PC-3 (cell line): ENCODE measurements at regions of chr2 and their contacts with region 1.

Region 1: DNA sequence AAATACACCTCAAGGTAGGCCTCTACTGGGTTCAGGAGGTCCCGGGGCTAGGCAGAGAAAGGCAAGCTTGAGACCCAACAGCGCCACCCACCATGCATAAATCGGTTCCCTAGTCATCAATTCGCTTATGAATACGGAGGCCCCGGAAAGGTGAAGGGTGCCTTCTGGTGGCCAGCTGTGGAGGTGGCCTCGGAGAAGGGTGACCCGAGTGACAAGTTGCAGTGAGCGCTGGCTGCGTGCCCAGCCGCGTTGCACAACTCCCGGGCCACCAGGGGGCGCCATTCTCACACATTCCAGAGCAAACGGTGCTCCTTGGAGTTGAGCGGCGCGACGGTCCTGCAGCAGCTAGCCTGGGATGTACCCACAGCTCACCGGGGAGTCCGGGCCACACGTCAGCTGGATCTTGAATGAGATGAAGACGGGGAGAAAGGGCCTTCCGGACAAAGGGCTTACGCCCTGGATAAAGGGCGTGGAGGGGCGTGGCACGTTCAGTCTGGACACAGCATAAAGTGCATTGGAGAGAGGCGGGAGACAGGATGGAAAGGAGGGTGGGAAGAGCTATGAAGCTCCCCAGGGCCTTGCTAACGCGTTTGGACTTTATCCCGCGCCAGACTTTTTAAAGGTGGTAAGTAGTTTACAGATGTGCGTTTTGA is 20.4 kb downstream of the TMSB10 start:
- DNase-seq: peak; percentile 98
- ATAC-seq: peak; percentile 86
- H3K4me3 ChIP-seq: peak overlapping the region; percentile 74
- H3K27ac ChIP-seq: peak overlapping the region; percentile 80
- H3K4me1 ChIP-seq: peaks cover 20% of the 10 kb centered on the region
- H3K27me3 ChIP-seq: no peaks in the 10 kb centered on the region
- CTCF ChIP-seq: peak; percentile 99

Region 2: GRCh38 chr2:84495539-84496146 is 430.2 kb before region 1 on chr2:
- CTCF ChIA-PET with region 1: no interaction called
- POLR2A ChIA-PET with region 1: no interaction called
- intact Hi-C with region 1: loop called (anchors 5 kb)
- DNase-seq: peak; percentile 72
- ATAC-seq: peak; percentile 74
- H3K4me3 ChIP-seq: no peak overlapping the region
- H3K27ac ChIP-seq: no peak overlapping the region
- H3K4me1 ChIP-seq: peaks cover 18% of the 10 kb centered on the region
- H3K27me3 ChIP-seq: no peaks in the 10 kb centered on the region
- CTCF ChIP-seq: peak; percentile 77

Region 3: DNA sequence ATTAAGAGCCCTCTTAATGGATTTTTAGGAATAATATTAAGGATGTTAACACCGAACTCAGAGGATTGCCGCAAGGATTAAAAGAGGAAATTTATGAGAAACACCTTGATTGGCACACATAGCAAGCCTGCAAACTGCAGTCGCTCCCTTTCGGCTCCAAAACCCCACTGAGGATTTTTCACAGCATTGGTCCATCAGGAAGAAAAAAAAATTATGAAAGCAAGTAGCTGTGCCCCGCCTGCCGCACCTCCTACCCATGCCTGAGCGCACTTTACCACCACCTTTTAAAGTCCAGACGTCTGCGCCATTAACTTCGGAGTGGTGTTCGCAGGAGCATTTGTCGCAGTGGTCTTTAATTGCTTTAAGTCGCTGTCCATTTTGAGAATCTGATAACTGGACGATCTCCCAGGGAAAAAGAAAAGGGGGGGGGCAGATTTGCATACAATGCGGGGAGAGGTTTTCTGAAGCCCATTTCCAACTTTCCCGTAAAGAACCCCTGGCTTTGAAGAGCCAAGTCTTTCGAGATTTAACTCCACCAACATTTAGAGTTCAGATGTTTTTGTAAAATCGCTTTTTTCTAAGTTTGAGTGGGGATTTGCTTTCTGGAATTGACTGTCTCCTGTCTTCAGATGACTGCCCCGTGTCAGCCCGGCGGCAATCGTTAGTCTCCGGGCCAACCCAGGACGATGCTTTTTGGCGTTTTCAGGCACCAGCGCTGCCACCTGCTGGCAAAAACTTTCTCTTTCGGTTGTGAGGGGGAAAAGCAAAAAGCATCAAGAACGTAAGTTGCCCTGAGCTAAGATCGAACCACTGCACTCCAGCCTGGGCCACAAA is 44.1 kb before region 1 on chr2:
- CTCF ChIA-PET with region 1: interaction called, 23 read pairs
- POLR2A ChIA-PET with region 1: no interaction called
- intact Hi-C with region 1: loop called (anchors 1 kb)
- DNase-seq: peak; percentile 91
- ATAC-seq: peak; percentile 90
- H3K4me3 ChIP-seq: peak overlapping the region; percentile 77
- H3K27ac ChIP-seq: no peak overlapping the region
- H3K4me1 ChIP-seq: peaks cover 5% of the 10 kb centered on the region
- H3K27me3 ChIP-seq: peaks cover 15% of the 10 kb centered on the region
- CTCF ChIP-seq: peak; percentile 87

Region 4: GRCh38 chr2:84946204-84947009 is 20.6 kb after region 1 on chr2:
- CTCF ChIA-PET with region 1: interaction called, 16 read pairs
- POLR2A ChIA-PET with region 1: interaction called, 5 read pairs
- intact Hi-C with region 1: no loop called
- DNase-seq: peak; percentile 98
- ATAC-seq: peak; percentile 94
- H3K4me3 ChIP-seq: peak overlapping the region; percentile 47
- H3K27ac ChIP-seq: peak overlapping the region; percentile 100
- H3K4me1 ChIP-seq: peaks cover 29% of the 10 kb centered on the region
- H3K27me3 ChIP-seq: no peaks in the 10 kb centered on the region
- CTCF ChIP-seq: 0 out of 2 replicates have a peak, but pooled peaks have one; percentile 22

Region 5: GRCh38 chr2:84970868-84971509 is 45.1 kb after region 1 on chr2 and contains the start of gene KCMF1:
- CTCF ChIA-PET with region 1: interaction called, 11 read pairs
- POLR2A ChIA-PET with region 1: interaction called, 9 read pairs
- intact Hi-C with region 1: loop called (anchors 1 kb)
- DNase-seq: peak; percentile 75
- ATAC-seq: peak; percentile 72
- H3K4me3 ChIP-seq: peak within 1 kb of the TSS; percentile 82
- H3K27ac ChIP-seq: peak within 1 kb of the TSS; percentile 82
- H3K4me1 ChIP-seq: peaks cover 27% of the 10 kb centered on the region; the same call in 1 of the 2 replicates
- H3K27me3 ChIP-seq: no peaks in the 10 kb centered on the region
- CTCF ChIP-seq: no peak
- total RNA-seq, gene KCMF1: 62.1 and 73.6 TPM in 2 replicates

Region 6: GRCh38 chr2:85011747-85012146 is 85.9 kb after region 1 on chr2:
- CTCF ChIA-PET with region 1: interaction called, 14 read pairs
- POLR2A ChIA-PET with region 1: no interaction called
- intact Hi-C with region 1: loop called (anchors 1 kb)
- DNase-seq: no peak
- ATAC-seq: no peak
- H3K4me3 ChIP-seq: no peak overlapping the region
- H3K27ac ChIP-seq: no peak overlapping the region
- H3K4me1 ChIP-seq: peaks cover 23% of the 10 kb centered on the region
- H3K27me3 ChIP-seq: no peaks in the 10 kb centered on the region
- CTCF ChIP-seq: peak; percentile 42; the same call in 1 of the 2 replicates

Region 7: GRCh38 chr2:85302121-85302520 is 376.3 kb after region 1 on chr2:
- CTCF ChIA-PET with region 1: no interaction called
- POLR2A ChIA-PET with region 1: interaction called, 12 read pairs
- intact Hi-C with region 1: loop called (anchors 1 kb)
- DNase-seq: no peak
- ATAC-seq: no peak
- H3K4me3 ChIP-seq: no peak overlapping the region
- H3K27ac ChIP-seq: no peak overlapping the region
- H3K4me1 ChIP-seq: no peaks in the 10 kb centered on the region
- H3K27me3 ChIP-seq: no peaks in the 10 kb centered on the region
- CTCF ChIP-seq: no peak